Transverse colon (tissue), 4 donors: ENCODE measurements at regions of chr20 and their contacts with region 1.

Region 1: GRCh38 chr20:59580553-59580946 is 23.8 kb upstream of the PHACTR3 start:
- DNase-seq: no peak
- H3K4me3 ChIP-seq: no peak overlapping the region
- H3K27ac ChIP-seq: no peak overlapping the region
- H3K4me1 ChIP-seq: no peaks in the 10 kb centered on the region
- H3K27me3 ChIP-seq: peaks cover 42% of the 10 kb centered on the region
- CTCF ChIP-seq: no peak
- EP300 ChIP-seq: no peak
- POLR2A ChIP-seq: no peak

Region 2: GRCh38 chr20:59628171-59628570 is 47.6 kb after region 1 on chr20:
- in situ Hi-C with region 1: no loop called
- intact Hi-C with region 1: loop called (anchors 1 kb)
- DNase-seq: no peak
- H3K4me3 ChIP-seq: no peak overlapping the region
- H3K27ac ChIP-seq: no peak overlapping the region
- H3K4me1 ChIP-seq: no peaks in the 10 kb centered on the region
- H3K27me3 ChIP-seq: peaks cover 3% of the 10 kb centered on the region
- CTCF ChIP-seq: no peak
- EP300 ChIP-seq: no peak
- POLR2A ChIP-seq: no peak